AG04449 (cell line): ENCODE measurements at regions of chr3 and their contacts with region 1.

Region 1: GRCh38 chr3:193572426-193572908 is 17.8 kb upstream of the ATP13A4 start:
- DNase-seq: no peak
- H3K4me3 ChIP-seq: no peak overlapping the region
- CTCF ChIP-seq: peak; percentile 78

Region 2: DNA sequence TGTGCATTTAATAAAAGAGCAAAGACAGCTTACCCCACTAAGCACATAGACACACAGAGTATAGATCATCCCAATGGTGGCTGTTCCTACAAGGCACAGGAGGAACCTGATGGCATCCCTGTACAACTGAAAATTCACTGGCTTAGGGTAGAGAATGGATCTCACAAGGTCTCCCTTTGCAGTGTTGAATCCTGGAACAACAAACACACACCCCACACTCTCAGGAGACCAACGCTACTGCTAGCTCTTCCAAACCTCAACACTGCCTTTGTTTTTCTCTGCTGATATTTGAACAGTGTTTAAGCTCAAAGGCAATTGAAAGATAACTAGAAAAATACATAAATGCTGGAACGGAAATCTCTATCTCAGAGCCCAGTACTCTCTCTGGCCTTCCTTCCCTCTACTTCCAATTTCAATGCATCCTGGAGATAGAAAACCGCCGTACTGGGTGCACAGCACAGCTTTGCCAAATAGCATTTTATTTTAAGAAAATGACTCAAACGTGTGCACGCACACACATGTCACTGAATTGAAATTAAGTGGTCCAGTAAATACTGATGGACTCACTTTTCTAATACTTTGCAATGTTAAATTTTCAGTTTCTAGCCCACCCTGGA is 106.4 kb before region 1 on chr3:
- CTCF ChIA-PET with region 1: interaction called, 23 read pairs
- POLR2A ChIA-PET with region 1: no interaction called
- DNase-seq: no peak
- H3K4me3 ChIP-seq: no peak overlapping the region
- CTCF ChIP-seq: no peak